ENCODE measurements at regions of chr2 and their contacts with region 1.

Region 1: GRCh38 chr2:228048838-228049490 is 132.5 kb downstream of the SPHKAP start:
- DNase-seq: peak; percentile 66
- H3K4me3 Mint-ChIP-seq: no peak overlapping the region
- H3K27ac Mint-ChIP-seq: no peak overlapping the region
- H3K4me1 Mint-ChIP-seq: peaks cover 16% of the 10 kb centered on the region
- H3K27me3 Mint-ChIP-seq: no peaks in the 10 kb centered on the region
- CTCF ChIP-seq: peak; percentile 66

Region 2: GRCh38 chr2:227826019-227826521 is 222.9 kb before region 1 on chr2:
- CTCF ChIA-PET with region 1: no interaction called
- intact Hi-C with region 1: no loop called
- DNase-seq: no peak
- H3K4me3 Mint-ChIP-seq: no peak overlapping the region
- H3K27ac Mint-ChIP-seq: no peak overlapping the region
- H3K4me1 Mint-ChIP-seq: peaks cover 37% of the 10 kb centered on the region
- H3K27me3 Mint-ChIP-seq: peaks cover 28% of the 10 kb centered on the region
- CTCF ChIP-seq: no peak

Region 3: DNA sequence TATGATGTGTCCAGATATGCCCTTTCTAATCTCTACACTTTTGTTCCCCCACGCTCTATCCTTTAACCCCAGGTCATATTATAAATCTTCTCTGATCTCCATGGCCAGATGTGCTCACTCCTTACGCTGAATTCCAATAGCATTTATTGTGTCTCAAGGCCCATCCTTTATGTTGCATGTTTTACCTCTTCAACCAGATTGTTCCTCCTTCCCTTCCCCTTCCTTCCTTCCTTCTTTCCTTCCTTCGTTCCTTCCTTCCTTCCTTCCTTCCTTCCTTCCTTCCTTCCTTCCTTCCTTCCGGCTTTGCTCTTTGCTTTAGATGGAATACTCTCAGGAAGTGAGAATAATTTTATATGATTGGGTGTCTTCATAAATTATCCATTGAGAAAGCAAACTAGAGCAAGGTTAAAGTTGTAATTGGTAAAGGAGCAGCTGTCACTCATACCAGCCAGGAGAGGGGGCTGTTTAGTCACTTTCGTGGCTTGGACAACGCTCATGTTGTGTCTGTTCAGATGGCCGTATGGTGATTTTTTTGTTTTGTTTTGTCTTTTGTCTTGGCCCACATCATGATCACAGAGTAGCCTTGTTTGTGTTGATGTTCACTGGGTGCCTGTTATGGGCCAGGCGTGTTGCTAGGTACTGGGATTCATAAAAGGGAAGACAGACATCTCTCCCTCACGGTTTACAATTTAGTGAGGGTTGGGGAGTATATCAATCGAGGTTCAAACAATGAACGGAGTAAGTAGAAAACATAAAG is 109.5 kb before region 1 on chr2:
- CTCF ChIA-PET with region 1: no interaction called
- intact Hi-C with region 1: loop called (anchors 2 kb)
- DNase-seq: peak; percentile 45
- H3K4me3 Mint-ChIP-seq: no peak overlapping the region
- H3K27ac Mint-ChIP-seq: no peak overlapping the region
- H3K4me1 Mint-ChIP-seq: no peaks in the 10 kb centered on the region
- H3K27me3 Mint-ChIP-seq: no peaks in the 10 kb centered on the region
- CTCF ChIP-seq: peak; percentile 59

Region 4: DNA sequence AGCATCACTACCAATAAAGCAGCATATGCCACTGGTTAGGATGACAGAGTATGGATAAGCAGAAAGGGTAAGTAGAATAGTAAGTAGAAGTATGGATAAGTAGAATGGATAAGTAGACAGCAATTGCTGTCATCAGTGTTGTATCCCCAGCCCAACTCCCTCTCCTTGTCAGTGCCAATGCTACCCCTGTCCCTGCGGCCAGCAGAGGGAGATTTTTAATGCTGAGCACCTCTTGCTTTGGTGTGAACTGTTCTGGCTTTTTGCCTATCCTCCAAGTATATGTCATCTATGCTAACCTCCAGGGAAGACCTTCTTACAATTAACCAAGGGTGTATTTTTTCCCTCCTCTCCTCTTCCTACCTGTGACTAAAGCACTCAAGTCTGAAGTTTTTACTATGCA is 269.3 kb after region 1 on chr2:
- CTCF ChIA-PET with region 1: no interaction called
- intact Hi-C with region 1: loop called (anchors 2 kb)
- DNase-seq: peak; percentile 53
- H3K4me3 Mint-ChIP-seq: no peak overlapping the region
- H3K27ac Mint-ChIP-seq: no peak overlapping the region
- H3K4me1 Mint-ChIP-seq: no peaks in the 10 kb centered on the region
- H3K27me3 Mint-ChIP-seq: no peaks in the 10 kb centered on the region
- CTCF ChIP-seq: peak; percentile 71

Region 5: DNA sequence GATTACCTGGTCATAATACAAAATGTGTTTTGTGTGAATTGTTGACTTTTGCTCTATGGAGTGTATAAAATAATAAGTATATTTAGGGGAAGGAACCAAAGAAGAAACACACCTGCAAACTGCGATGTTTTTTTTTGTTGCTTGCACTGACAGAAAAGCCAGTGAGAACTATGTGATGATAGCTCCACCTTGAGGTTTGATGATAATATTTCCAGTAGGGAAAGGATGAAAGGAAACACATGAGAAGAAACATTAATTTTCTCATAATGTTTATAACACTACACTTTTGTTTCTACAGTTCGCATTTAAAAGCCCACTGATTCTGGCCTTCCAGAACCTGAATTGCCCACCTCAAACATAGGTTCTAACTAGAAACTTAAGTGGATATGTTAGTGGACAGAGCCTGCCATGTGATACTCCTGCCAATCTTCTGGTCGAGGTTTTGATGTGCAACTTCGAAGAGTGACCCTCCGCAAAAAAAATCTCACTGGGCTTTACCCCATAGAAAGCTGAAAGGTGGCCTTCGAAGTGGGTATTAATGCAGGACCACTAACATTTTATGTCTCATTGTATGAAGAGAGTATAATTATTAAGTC is 608.9 kb after region 1 on chr2:
- CTCF ChIA-PET with region 1: interaction called, 10 read pairs
- intact Hi-C with region 1: loop called (anchors 1 kb)
- DNase-seq: peak; percentile 29
- H3K4me3 Mint-ChIP-seq: no peak overlapping the region
- H3K27ac Mint-ChIP-seq: no peak overlapping the region
- H3K4me1 Mint-ChIP-seq: peaks cover 19% of the 10 kb centered on the region
- H3K27me3 Mint-ChIP-seq: no peaks in the 10 kb centered on the region
- CTCF ChIP-seq: no peak